A673 (cell line): ENCODE measurements at regions of chr4 and their contacts with region 1.

Region 1: DNA sequence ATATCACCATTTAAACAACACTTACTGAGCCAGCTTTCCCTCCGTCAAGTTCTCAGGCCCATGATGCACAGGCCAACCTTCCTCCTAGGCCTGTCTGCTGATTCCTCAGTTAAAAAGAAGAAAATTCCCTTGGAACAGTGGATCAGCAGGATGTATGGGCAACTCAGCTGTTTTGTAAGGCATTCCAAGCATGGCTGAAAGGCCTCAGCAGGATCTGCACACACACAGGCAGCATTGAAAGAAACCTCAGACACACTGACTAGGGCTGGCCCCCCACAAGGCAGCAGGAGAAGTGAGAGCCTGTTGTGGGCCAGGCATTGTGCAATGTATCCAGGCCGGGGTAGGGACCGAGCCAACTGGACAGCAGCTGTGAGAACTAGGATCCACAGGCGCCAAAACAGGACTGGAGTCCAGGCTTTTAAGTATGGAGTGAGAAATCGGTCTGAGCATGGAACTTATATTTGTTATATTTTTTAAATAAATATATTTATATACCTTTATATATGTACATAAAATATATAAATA is 171.4 kb downstream of the NWD2 start:
- DNase-seq: no peak
- H3K4me3 ChIP-seq: no peak overlapping the region
- H3K27ac ChIP-seq: no peak overlapping the region
- H3K4me1 ChIP-seq: no peaks in the 10 kb centered on the region
- H3K27me3 ChIP-seq: no peaks in the 10 kb centered on the region
- CTCF ChIP-seq: no peak

Region 2: GRCh38 chr4:37365888-37366287 is 50.0 kb before region 1 on chr4:
- CTCF ChIA-PET with region 1: no interaction called
- POLR2A ChIA-PET with region 1: no interaction called
- intact Hi-C with region 1: loop called (anchors 5 kb)
- DNase-seq: peak; percentile 79
- H3K4me3 ChIP-seq: no peak overlapping the region
- H3K27ac ChIP-seq: no peak overlapping the region
- H3K4me1 ChIP-seq: peaks cover 6% of the 10 kb centered on the region
- H3K27me3 ChIP-seq: no peaks in the 10 kb centered on the region
- CTCF ChIP-seq: no peak